Tibial artery (tissue), 4 donors: ENCODE measurements at regions of chr21 and their contacts with region 1.

Region 1: DNA sequence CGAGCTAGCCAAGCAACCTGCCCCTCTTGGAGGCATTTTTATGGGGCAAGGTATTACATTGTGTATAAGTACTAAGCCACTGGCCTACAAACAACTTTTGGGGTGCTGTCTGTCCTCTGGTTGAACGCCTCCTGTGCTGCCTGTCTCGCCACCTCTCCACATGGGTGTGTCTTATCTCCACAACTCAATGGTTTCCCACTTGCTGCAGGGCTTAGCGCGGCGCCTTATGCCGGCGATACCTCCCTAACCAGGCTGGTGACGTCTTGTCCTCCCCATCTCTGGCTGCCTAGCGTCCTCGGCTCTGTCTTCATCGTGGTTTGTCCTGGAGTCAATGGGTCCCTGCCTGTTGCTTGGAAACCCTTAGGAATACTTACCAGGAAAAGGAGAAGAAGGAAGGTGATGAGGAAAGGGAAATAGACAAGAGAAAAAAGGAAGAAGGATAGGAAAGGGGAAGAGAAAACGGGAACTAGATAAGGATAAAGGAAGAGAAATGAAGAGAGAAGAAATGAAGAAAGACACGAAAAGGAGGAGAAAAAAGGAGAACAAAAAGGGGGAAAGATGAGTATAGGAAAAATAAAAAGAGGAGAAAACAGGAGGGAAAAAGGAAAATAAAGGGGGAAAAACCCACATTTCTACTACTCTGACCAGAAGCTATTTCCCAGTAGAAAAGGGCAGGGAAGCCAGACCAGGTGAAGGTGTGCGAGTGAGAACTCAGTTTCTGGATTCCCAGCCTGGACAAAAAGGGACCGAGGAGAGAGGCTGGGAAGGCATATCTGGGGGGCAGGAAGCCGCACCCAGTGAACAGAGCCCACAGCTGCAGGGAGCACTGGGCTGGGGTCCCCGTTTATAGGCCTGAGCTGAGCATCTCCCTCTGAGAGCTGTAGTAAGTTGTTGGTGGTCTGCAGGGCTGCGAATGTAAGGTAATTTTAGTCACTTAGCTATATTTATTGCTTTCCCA is 86.2 kb downstream of the CLIC6 start:
- DNase-seq: no peak
- H3K4me3 ChIP-seq: no peak overlapping the region
- H3K27ac ChIP-seq: no peak overlapping the region
- H3K4me1 ChIP-seq: no peaks in the 10 kb centered on the region
- H3K27me3 ChIP-seq: no peaks in the 10 kb centered on the region
- CTCF ChIP-seq: no peak

Region 2: DNA sequence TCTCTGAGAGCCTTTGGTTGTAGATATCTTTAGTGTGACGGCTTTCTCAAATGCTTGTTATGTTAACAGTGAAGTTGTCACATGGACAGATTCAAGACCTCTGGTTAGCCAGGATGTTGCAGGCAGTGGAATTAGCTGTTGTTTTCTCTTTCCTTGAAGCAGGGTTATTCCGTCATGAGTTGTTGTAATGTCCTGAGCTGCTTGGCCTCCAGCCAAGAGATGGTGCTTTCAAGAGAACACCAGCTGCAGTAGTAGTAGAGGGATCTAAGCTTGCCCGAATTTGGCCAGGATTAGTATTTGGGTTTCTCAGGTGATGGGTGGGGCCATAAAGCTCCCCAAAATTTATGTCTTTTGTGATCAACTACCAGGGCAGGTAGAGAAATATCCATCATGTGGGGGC is 256.3 kb before region 1 on chr21:
- intact Hi-C with region 1: no loop called
- DNase-seq: no peak
- H3K4me3 ChIP-seq: no peak overlapping the region
- H3K27ac ChIP-seq: no peak overlapping the region
- H3K4me1 ChIP-seq: no peaks in the 10 kb centered on the region
- H3K27me3 ChIP-seq: no peaks in the 10 kb centered on the region
- CTCF ChIP-seq: no peak

Region 3: GRCh38 chr21:34826836-34827235 is 71.9 kb after region 1 on chr21:
- intact Hi-C with region 1: no loop called
- DNase-seq: no peak
- H3K4me3 ChIP-seq: no peak overlapping the region
- H3K27ac ChIP-seq: no peak overlapping the region
- H3K4me1 ChIP-seq: no peaks in the 10 kb centered on the region
- H3K27me3 ChIP-seq: no peaks in the 10 kb centered on the region
- CTCF ChIP-seq: no peak

Region 4: GRCh38 chr21:34956416-34957316 is 201.7 kb after region 1 on chr21:
- intact Hi-C with region 1: no loop called
- DNase-seq: no peak
- H3K4me3 ChIP-seq: no peak overlapping the region
- H3K27ac ChIP-seq: no peak overlapping the region
- H3K4me1 ChIP-seq: no peaks in the 10 kb centered on the region
- H3K27me3 ChIP-seq: no peaks in the 10 kb centered on the region
- CTCF ChIP-seq: no peak

Region 5: GRCh38 chr21:35932232-35932911 is 1177.4 kb after region 1 on chr21:
- intact Hi-C with region 1: loop called (anchors 10 kb)
- DNase-seq: peak; percentile 61 to 70
- H3K4me3 ChIP-seq: no peak overlapping the region
- H3K27ac ChIP-seq: peak overlapping the region; percentile 28 to 29
- H3K4me1 ChIP-seq: peaks cover 0 to 13% (median 6%) of the 10 kb centered on the region in 4 donors
- H3K27me3 ChIP-seq: no peaks in the 10 kb centered on the region
- CTCF ChIP-seq: no peak